ENCODE measurements at regions of chr2 and their contacts with region 1.

Region 1: GRCh38 chr2:101883863-101884262 is 107.9 kb upstream of the IL1R2 start:
- DNase-seq: no peak
- ATAC-seq: peak; percentile 95
- H3K4me3 ChIP-seq: no peak overlapping the region
- H3K27ac ChIP-seq: no peak overlapping the region
- H3K4me1 ChIP-seq: no peaks in the 10 kb centered on the region
- H3K27me3 ChIP-seq: no peaks in the 10 kb centered on the region
- CTCF ChIP-seq: peak; percentile 50 to 70 (median 63); a peak in 5 of 6 replicates
- EP300 ChIP-seq: no peak
- POLR2A ChIP-seq: no peak
- RAD21 ChIP-seq: peak; percentile 64

Region 2: GRCh38 chr2:101160454-101160853 is 723.4 kb before region 1 on chr2:
- CTCF ChIA-PET with region 1: no interaction called
- POLR2A ChIA-PET with region 1: no interaction called
- RAD21 ChIA-PET with region 1: no interaction called
- SMC1A ChIA-PET with region 1: no interaction called
- in situ Hi-C with region 1: no loop called
- intact Hi-C with region 1: no loop called
- DNase-seq: no peak
- ATAC-seq: no peak
- H3K4me3 ChIP-seq: no peak overlapping the region
- H3K27ac ChIP-seq: no peak overlapping the region
- H3K4me1 ChIP-seq: no peaks in the 10 kb centered on the region
- H3K27me3 ChIP-seq: no peaks in the 10 kb centered on the region
- CTCF ChIP-seq: no peak
- EP300 ChIP-seq: no peak
- POLR2A ChIP-seq: no peak
- RAD21 ChIP-seq: no peak

Region 3: DNA sequence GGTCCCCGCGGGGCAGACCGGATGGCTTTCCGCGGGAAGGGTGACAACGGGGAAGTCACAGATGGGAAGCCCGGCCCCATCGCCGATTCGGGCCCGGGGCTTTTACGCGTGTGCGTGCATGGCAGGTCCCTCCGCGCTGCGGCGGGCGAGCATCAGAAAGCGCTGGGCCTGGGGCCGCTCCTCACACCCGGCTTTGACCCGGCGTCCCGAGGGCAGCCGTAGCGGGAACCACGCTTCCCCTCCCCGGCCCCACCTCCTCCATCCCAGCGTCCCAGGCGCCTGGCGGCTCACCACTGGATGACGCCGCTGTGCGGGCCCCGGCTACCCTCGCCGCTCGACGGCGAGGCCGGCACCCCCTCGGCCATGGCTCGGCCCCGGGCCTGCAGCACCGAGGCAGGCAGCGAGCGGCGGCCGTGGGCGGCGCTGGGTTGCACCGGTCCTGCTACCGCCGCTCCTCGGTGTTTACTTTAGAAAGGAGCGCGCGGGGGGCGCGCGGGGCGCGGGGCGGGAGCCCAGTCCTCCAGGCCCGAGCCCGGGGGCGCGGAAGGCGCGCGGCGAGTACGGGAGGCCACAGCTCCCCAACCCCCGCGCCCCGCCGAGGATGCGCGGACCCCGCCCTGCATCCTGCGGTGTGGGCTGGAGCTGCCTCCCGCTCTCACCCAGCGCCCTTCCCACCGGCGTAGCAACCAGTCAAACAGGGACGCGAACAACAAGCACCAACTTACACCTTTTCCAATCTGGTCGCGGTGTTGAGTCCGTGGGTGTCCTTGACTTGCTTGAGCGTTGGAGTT is 409.8 kb before region 1 on chr2:
- CTCF ChIA-PET with region 1: no interaction called
- POLR2A ChIA-PET with region 1: no interaction called
- RAD21 ChIA-PET with region 1: no interaction called
- SMC1A ChIA-PET with region 1: no interaction called
- in situ Hi-C with region 1: no loop called
- intact Hi-C with region 1: no loop called
- DNase-seq: no peak
- ATAC-seq: peak; percentile 67
- H3K4me3 ChIP-seq: no peak overlapping the region
- H3K27ac ChIP-seq: no peak overlapping the region
- H3K4me1 ChIP-seq: no peaks in the 10 kb centered on the region
- H3K27me3 ChIP-seq: peaks cover 4 to 11% of the 10 kb centered on the region in 2 experiments
- CTCF ChIP-seq: no peak
- EP300 ChIP-seq: no peak
- POLR2A ChIP-seq: no peak
- RAD21 ChIP-seq: no peak

Region 4: DNA sequence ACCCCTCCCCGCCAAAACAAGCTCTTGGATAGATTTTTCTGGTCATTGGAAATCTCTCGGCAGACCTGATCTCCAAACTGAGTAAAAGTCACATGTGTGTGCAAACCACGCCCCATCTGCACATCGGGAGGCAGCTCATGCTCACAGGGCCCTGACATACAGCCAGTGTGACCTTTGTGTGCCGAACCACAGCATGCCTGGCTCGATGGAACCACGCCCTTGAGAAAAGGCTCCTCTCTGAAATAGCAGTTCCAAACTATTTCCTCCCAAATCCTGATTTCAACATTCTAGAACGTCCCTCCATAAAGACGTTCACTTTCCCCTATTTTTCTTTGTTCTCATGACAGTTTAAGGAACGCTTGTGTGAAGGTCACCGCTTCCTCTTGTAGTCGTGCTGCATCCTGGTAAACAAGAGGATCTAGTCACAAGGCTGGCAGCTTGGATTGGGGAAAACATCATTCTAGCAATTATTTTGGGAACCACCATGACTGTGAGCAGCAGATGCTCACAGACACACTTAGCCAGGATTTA is 245.6 kb before region 1 on chr2:
- CTCF ChIA-PET with region 1: no interaction called
- POLR2A ChIA-PET with region 1: no interaction called
- RAD21 ChIA-PET with region 1: no interaction called
- SMC1A ChIA-PET with region 1: no interaction called
- in situ Hi-C with region 1: no loop called
- intact Hi-C with region 1: no loop called
- DNase-seq: no peak
- ATAC-seq: no peak
- H3K4me3 ChIP-seq: no peak overlapping the region
- H3K27ac ChIP-seq: no peak overlapping the region
- H3K4me1 ChIP-seq: no peaks in the 10 kb centered on the region
- H3K27me3 ChIP-seq: peaks cover 0 to 2% of the 10 kb centered on the region in 2 experiments; a peak in 1 of 4 replicates
- CTCF ChIP-seq: no peak
- EP300 ChIP-seq: no peak
- POLR2A ChIP-seq: no peak
- RAD21 ChIP-seq: no peak

Region 5: GRCh38 chr2:101974663-101975062 is 90.8 kb after region 1 on chr2:
- CTCF ChIA-PET with region 1: interaction called, 3 read pairs
- POLR2A ChIA-PET with region 1: no interaction called
- RAD21 ChIA-PET with region 1: interaction called, 3 read pairs
- SMC1A ChIA-PET with region 1: interaction called, 19 read pairs
- in situ Hi-C with region 1: no loop called
- intact Hi-C with region 1: no loop called
- DNase-seq: no peak
- ATAC-seq: no peak
- H3K4me3 ChIP-seq: no peak overlapping the region
- H3K27ac ChIP-seq: no peak overlapping the region
- H3K4me1 ChIP-seq: no peaks in the 10 kb centered on the region
- H3K27me3 ChIP-seq: no peaks in the 10 kb centered on the region
- CTCF ChIP-seq: no peak
- EP300 ChIP-seq: no peak
- POLR2A ChIP-seq: no peak
- RAD21 ChIP-seq: no peak

Region 6: DNA sequence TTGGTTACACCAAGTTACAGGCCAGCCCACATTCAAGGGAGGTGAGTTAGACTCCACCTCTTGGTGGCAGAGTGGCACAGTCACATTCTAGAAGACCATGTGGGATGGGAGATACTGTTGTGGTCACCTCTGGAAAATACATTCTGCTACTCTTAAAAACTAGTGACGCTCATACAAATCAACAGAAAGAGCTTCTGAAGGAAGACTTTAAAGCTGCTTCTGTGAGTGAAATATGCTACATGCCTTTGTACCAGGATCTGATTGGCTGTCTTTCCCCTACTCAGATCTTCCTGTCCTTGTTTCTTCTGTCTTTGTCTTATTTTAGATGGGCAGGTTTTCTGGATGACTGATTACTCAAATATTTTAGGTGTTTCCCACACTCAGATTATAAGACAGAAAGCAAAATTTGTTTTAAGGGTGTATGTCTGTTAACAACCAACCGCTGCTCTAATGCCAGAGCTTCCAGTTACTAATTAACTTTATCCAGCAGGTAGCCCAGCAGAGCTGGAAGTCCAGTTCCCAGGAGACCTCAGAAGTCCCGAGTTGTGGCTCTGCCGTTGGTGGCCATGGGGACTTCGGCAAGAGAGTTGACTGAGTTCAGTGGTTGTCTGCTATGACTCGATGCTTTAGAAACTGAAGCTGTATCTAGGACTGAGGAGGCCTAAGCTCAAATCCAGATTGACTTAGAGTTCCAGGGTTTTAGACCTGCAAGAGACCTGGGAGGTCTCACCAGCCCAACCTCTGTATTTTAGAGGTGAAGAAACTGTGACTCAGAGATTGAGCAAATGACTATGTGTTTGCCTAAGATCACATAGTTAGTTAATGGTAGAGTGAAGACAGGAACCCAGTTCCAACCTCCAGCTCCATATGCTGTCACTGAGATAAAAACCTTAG is 115.3 kb after region 1 on chr2:
- CTCF ChIA-PET with region 1: interaction called, 166 read pairs
- POLR2A ChIA-PET with region 1: interaction called, 3 read pairs
- RAD21 ChIA-PET with region 1: interaction called, 61 read pairs
- SMC1A ChIA-PET with region 1: interaction called, 105 read pairs
- in situ Hi-C with region 1: no loop called
- intact Hi-C with region 1: loop called (anchors 2 kb)
- DNase-seq: no peak
- ATAC-seq: peak; percentile 71
- H3K4me3 ChIP-seq: no peak overlapping the region
- H3K27ac ChIP-seq: peak overlapping the region; percentile 50; the same call in 1 of the 2 replicates
- H3K4me1 ChIP-seq: peaks cover 6% of the 10 kb centered on the region
- H3K27me3 ChIP-seq: no peaks in the 10 kb centered on the region; a peak in 2 of 4 replicates
- CTCF ChIP-seq: no peak; a peak in 1 of 6 replicates
- EP300 ChIP-seq: 0 out of 4 replicates have a peak, but pooled peaks of 1 of the 2 experiments have one; percentile 13
- POLR2A ChIP-seq: no peak
- RAD21 ChIP-seq: no peak

Region 7: GRCh38 chr2:102103992-102104871 is 220.4 kb after region 1 on chr2:
- CTCF ChIA-PET with region 1: no interaction called
- POLR2A ChIA-PET with region 1: no interaction called
- RAD21 ChIA-PET with region 1: interaction called, 12 read pairs
- SMC1A ChIA-PET with region 1: interaction called, 4 read pairs
- in situ Hi-C with region 1: no loop called
- intact Hi-C with region 1: no loop called
- DNase-seq: peak; percentile 67
- ATAC-seq: peak; percentile 79
- H3K4me3 ChIP-seq: peak overlapping the region; percentile 53
- H3K27ac ChIP-seq: peak overlapping the region; percentile 37; the same call in 1 of the 2 replicates
- H3K4me1 ChIP-seq: no peaks in the 10 kb centered on the region
- H3K27me3 ChIP-seq: no peaks in the 10 kb centered on the region
- CTCF ChIP-seq: no peak
- EP300 ChIP-seq: peak in 1 of 2 experiments; percentile 54; a peak in 2 of 4 replicates
- POLR2A ChIP-seq: no peak
- RAD21 ChIP-seq: no peak

Region 8: GRCh38 chr2:102251042-102251848 is 367.4 kb after region 1 on chr2:
- CTCF ChIA-PET with region 1: interaction called, 11 read pairs
- POLR2A ChIA-PET with region 1: interaction called, 7 read pairs
- RAD21 ChIA-PET with region 1: interaction called, 10 read pairs
- SMC1A ChIA-PET with region 1: interaction called, 7 read pairs
- in situ Hi-C with region 1: no loop called
- intact Hi-C with region 1: no loop called
- DNase-seq: no peak
- ATAC-seq: peak; percentile 80
- H3K4me3 ChIP-seq: no peak overlapping the region
- H3K27ac ChIP-seq: no peak overlapping the region
- H3K4me1 ChIP-seq: no peaks in the 10 kb centered on the region
- H3K27me3 ChIP-seq: no peaks in the 10 kb centered on the region; a peak in 1 of 4 replicates
- CTCF ChIP-seq: peak; percentile 58 to 63 (median 60)
- EP300 ChIP-seq: no peak
- POLR2A ChIP-seq: no peak
- RAD21 ChIP-seq: 0 out of 2 replicates have a peak, but pooled peaks have one; percentile 25

Region 9: GRCh38 chr2:102442967-102443828 is 559.3 kb after region 1 on chr2:
- CTCF ChIA-PET with region 1: interaction called, 26 read pairs
- POLR2A ChIA-PET with region 1: no interaction called
- RAD21 ChIA-PET with region 1: interaction called, 15 read pairs
- SMC1A ChIA-PET with region 1: interaction called, 12 read pairs
- in situ Hi-C with region 1: loop called (anchors 10 kb)
- intact Hi-C with region 1: loop called (anchors 2 kb)
- DNase-seq: no peak
- ATAC-seq: peak; percentile 93
- H3K4me3 ChIP-seq: no peak overlapping the region
- H3K27ac ChIP-seq: no peak overlapping the region
- H3K4me1 ChIP-seq: 0 out of 2 replicates have a peak, but pooled peaks cover 3% of the 10 kb centered on the region
- H3K27me3 ChIP-seq: no peaks in the 10 kb centered on the region
- CTCF ChIP-seq: peak; percentile 70 to 88 (median 86)
- EP300 ChIP-seq: no peak
- POLR2A ChIP-seq: no peak
- RAD21 ChIP-seq: peak; percentile 96

Region 10: DNA sequence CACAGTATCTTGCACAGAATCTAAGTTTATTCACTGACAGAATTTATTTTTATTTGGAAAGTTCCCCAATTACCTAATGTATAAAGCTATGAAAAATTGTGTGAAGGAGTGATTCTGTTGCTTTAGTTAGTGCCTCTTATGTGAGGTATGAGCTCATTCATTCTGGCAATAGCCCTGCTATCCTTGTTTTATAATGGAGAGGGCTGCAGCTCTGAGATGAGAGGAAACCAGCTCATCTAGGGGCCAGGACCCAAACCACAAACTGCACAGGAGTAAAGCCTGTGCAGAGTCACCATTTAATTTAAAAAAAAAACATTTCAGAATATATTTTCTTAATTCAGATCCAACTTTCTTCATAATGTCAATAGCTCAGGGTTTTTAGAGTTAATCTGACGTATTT is 1261.0 kb after region 1 on chr2:
- CTCF ChIA-PET with region 1: no interaction called
- POLR2A ChIA-PET with region 1: no interaction called
- RAD21 ChIA-PET with region 1: no interaction called
- SMC1A ChIA-PET with region 1: no interaction called
- in situ Hi-C with region 1: no loop called
- intact Hi-C with region 1: no loop called
- DNase-seq: no peak
- ATAC-seq: no peak
- H3K4me3 ChIP-seq: no peak overlapping the region
- H3K27ac ChIP-seq: no peak overlapping the region
- H3K4me1 ChIP-seq: no peaks in the 10 kb centered on the region
- H3K27me3 ChIP-seq: no peaks in the 10 kb centered on the region; a peak in 1 of 4 replicates
- CTCF ChIP-seq: no peak
- EP300 ChIP-seq: no peak
- POLR2A ChIP-seq: no peak
- RAD21 ChIP-seq: no peak

Measured in GM12878 (cell line).